ENCODE measurements at regions of chr2 and their contacts with region 1.

Region 1: GRCh38 chr2:74715078-74715791 is 61.2 kb downstream of the SEMA4F start:
- DNase-seq: no peak
- H3K4me3 ChIP-seq: peak overlapping the region; percentile 51
- H3K27me3 ChIP-seq: no peaks in the 10 kb centered on the region
- CTCF ChIP-seq: peak; percentile 88

Region 2: DNA sequence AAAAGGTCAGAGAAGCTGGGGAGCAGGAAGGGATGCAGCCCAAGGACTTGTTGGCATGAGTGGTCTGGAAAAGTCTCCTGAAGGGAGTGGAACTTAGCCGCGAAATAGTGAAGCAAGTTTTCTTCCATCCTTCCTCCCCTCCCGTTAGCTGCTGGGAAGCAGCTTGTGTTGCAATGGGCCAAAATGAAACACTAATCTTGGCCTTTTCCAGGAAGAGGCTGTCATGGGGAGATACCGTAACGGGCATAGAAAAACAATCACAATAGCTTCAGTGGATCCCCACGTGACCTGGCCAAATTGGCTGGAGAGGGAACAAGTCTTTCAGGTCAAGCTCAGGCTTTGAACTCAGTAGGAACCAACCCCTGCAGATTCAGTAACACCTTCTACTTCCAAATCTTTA is 11.9 kb before region 1 on chr2:
- CTCF ChIA-PET with region 1: interaction called, 26 read pairs
- POLR2A ChIA-PET with region 1: interaction called, 4 read pairs
- DNase-seq: no peak
- H3K4me3 ChIP-seq: no peak overlapping the region
- H3K27me3 ChIP-seq: peaks cover 3% of the 10 kb centered on the region
- CTCF ChIP-seq: no peak

Region 3: GRCh38 chr2:74833418-74834233 is 118.4 kb after region 1 on chr2 and contains the start of gene HK2:
- CTCF ChIA-PET with region 1: interaction called, 48 read pairs
- POLR2A ChIA-PET with region 1: no interaction called
- DNase-seq: no peak
- H3K4me3 ChIP-seq: peak within 1 kb of the TSS; percentile 95
- H3K27me3 ChIP-seq: no peaks in the 10 kb centered on the region
- CTCF ChIP-seq: no peak
- polyA plus RNA-seq, gene HK2: 21.8 and 23.8 TPM in 2 replicates

Measured in BJ (cell line).